Heart left ventricle (tissue), 16 donors: ENCODE measurements at regions of chrX and their contacts with region 1.

Region 1: GRCh38 chrX:17046478-17047097 is 100.1 kb downstream of the REPS2 start:
- DNase-seq: peak in 4 of 5 donors; percentile 30 to 45 (median 44)
- ATAC-seq: peak; percentile 73 to 83 (median 78)
- H3K4me3 ChIP-seq: no peak overlapping the region
- H3K27ac ChIP-seq: no peak overlapping the region
- H3K4me1 ChIP-seq: no peaks in the 10 kb centered on the region
- H3K27me3 ChIP-seq: peaks cover 0 to 6% (median 0%) of the 10 kb centered on the region in 9 donors
- CTCF ChIP-seq: peak; percentile 55 to 73 (median 66)
- POLR2A ChIP-seq: no peak

Region 2: GRCh38 chrX:16826207-16826606 is 220.4 kb before region 1 on chrX:
- intact Hi-C with region 1: loop called in 9 of 10 experiments (anchors 2 to 10 kb)
- DNase-seq: no peak
- ATAC-seq: peak in 2 of 4 donors; percentile 35 to 39
- H3K4me3 ChIP-seq: no peak overlapping the region
- H3K27ac ChIP-seq: no peak overlapping the region
- H3K4me1 ChIP-seq: peaks cover 0 to 12% (median 2%) of the 10 kb centered on the region in 12 donors
- H3K27me3 ChIP-seq: no peaks in the 10 kb centered on the region
- CTCF ChIP-seq: peak in 11 of 12 donors; percentile 32 to 63 (median 50)
- POLR2A ChIP-seq: no peak

Region 3: GRCh38 chrX:16836371-16836770 is 210.2 kb before region 1 on chrX:
- intact Hi-C with region 1: loop called in 1 of 10 experiments (anchors 5 kb)
- DNase-seq: no peak
- ATAC-seq: peak in 2 of 4 donors; percentile 33 to 43
- H3K4me3 ChIP-seq: no peak overlapping the region
- H3K27ac ChIP-seq: no peak overlapping the region
- H3K4me1 ChIP-seq: peaks cover 0 to 14% (median 7%) of the 10 kb centered on the region in 12 donors
- H3K27me3 ChIP-seq: no peaks in the 10 kb centered on the region
- CTCF ChIP-seq: peak in 6 of 12 donors; percentile 9 to 35 (median 22)
- POLR2A ChIP-seq: no peak

Region 4: DNA sequence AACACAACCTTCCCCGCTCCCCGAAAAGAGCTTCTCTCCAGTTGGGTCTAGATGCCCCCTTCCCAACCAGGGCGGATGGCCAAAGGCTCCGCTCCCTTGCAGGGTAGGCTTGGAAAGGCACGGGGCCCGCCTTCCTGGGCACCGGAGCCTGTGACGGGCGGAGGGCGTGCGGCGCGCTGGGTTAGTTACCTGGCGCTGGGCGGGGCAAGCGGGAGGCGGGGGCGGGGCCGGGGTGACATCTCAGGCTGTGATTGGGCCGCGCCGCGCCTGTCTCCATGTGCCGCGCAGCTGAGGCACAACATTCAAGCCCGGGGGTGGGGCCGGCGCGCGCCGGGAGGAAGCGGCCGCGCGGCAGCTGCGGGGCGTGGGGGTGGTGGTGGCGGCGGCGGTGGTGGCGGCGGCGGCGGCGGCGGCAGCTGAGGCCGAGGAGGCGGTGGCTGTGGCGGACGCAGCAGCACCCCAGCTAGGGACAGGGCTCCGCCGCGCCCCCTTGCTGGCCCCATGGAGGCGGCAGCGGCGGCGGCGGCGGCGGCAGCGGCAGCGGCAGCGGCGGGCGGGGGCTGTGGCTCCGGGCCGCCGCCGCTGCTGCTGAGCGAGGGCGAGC is 100.1 kb before region 1 on chrX and contains the start of gene REPS2:
- intact Hi-C with region 1: no loop called
- DNase-seq: peak; percentile 78 to 90 (median 82)
- ATAC-seq: peak; percentile 95 to 100 (median 99)
- H3K4me3 ChIP-seq: peak within 1 kb of the TSS; percentile 42 to 75 (median 60)
- H3K27ac ChIP-seq: peak within 1 kb of the TSS in 1 of 12 donors; percentile 17
- H3K4me1 ChIP-seq: peaks cover 0 to 6% (median 0%) of the 10 kb centered on the region in 12 donors
- H3K27me3 ChIP-seq: peaks cover 0 to 10% (median 0%) of the 10 kb centered on the region in 9 donors
- CTCF ChIP-seq: no peak
- POLR2A ChIP-seq: no peak
- total RNA-seq, gene REPS2: 3.3 to 11.9 (median 6.9) TPM